Endothelial cell of umbilical vein (primary cell): ENCODE measurements at regions of chr5 and their contacts with region 1.

Region 1: DNA sequence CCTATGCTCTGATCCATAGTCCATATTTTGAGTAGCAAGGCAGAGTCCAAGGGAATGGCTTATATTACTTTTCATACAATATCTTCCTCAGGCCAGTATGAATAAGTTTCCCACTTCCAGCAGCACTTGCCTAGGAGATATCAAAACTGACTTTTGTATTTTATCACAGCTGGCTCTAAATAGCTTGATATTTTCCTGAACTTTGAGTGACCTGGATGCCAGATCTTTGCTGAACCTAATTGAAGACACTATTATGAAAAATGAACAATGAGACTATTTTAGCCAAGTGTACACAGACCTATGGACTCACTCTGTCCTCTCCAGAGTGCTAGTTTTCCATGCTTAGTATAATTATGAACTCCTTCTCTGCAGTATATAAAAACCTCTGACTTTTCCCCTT is 475.6 kb upstream of the PTGER4 start:
- DNase-seq: peak; percentile 82
- H3K4me3 ChIP-seq: no peak overlapping the region
- H3K27ac ChIP-seq: peak overlapping the region; percentile 76
- H3K4me1 ChIP-seq: peaks cover 35% of the 10 kb centered on the region
- H3K27me3 ChIP-seq: no peaks in the 10 kb centered on the region
- CTCF ChIP-seq: no peak
- POLR2A ChIP-seq: no peak

Region 2: GRCh38 chr5:40223884-40224402 is 19.8 kb after region 1 on chr5:
- CTCF ChIA-PET with region 1: interaction called, 6 read pairs
- POLR2A ChIA-PET with region 1: no interaction called
- dilution Hi-C with region 1: no loop called
- intact Hi-C with region 1: loop called (anchors 1 kb)
- DNase-seq: peak; percentile 65
- H3K4me3 ChIP-seq: no peak overlapping the region
- H3K27ac ChIP-seq: peak overlapping the region; percentile 38
- H3K4me1 ChIP-seq: peaks cover 11% of the 10 kb centered on the region
- H3K27me3 ChIP-seq: no peaks in the 10 kb centered on the region
- CTCF ChIP-seq: no peak
- POLR2A ChIP-seq: no peak

Region 3: GRCh38 chr5:40655138-40655537 is 451.0 kb after region 1 on chr5:
- CTCF ChIA-PET with region 1: no interaction called
- POLR2A ChIA-PET with region 1: no interaction called
- dilution Hi-C with region 1: no loop called
- intact Hi-C with region 1: no loop called
- DNase-seq: peak; percentile 34
- H3K4me3 ChIP-seq: no peak overlapping the region
- H3K27ac ChIP-seq: no peak overlapping the region
- H3K4me1 ChIP-seq: no peaks in the 10 kb centered on the region
- H3K27me3 ChIP-seq: no peaks in the 10 kb centered on the region
- CTCF ChIP-seq: no peak
- POLR2A ChIP-seq: no peak